AG04449 (cell line): ENCODE measurements at regions of chr1 and their contacts with region 1.

Region 1: GRCh38 chr1:112614460-112615065 is 4.4 kb downstream of the ST7L start:
- DNase-seq: no peak
- H3K4me3 ChIP-seq: no peak overlapping the region
- CTCF ChIP-seq: peak; percentile 62

Region 2: GRCh38 chr1:112358798-112359408 is 255.7 kb before region 1 on chr1:
- CTCF ChIA-PET with region 1: interaction called, 22 read pairs
- POLR2A ChIA-PET with region 1: no interaction called
- DNase-seq: no peak
- H3K4me3 ChIP-seq: no peak overlapping the region
- CTCF ChIP-seq: peak; percentile 91

Region 3: GRCh38 chr1:112460615-112461014 is 153.9 kb before region 1 on chr1:
- CTCF ChIA-PET with region 1: interaction called, 30 read pairs
- POLR2A ChIA-PET with region 1: no interaction called
- DNase-seq: no peak
- H3K4me3 ChIP-seq: no peak overlapping the region
- CTCF ChIP-seq: no peak

Region 4: GRCh38 chr1:112492076-112492475 is 122.5 kb before region 1 on chr1:
- CTCF ChIA-PET with region 1: interaction called, 228 read pairs
- POLR2A ChIA-PET with region 1: no interaction called
- DNase-seq: no peak
- H3K4me3 ChIP-seq: no peak overlapping the region
- CTCF ChIP-seq: no peak

Region 5: GRCh38 chr1:112522621-112523020 is 91.9 kb before region 1 on chr1:
- CTCF ChIA-PET with region 1: interaction called, 12 read pairs
- POLR2A ChIA-PET with region 1: interaction called, 6 read pairs
- DNase-seq: peak; percentile 85
- H3K4me3 ChIP-seq: no peak overlapping the region
- CTCF ChIP-seq: no peak

Region 6: DNA sequence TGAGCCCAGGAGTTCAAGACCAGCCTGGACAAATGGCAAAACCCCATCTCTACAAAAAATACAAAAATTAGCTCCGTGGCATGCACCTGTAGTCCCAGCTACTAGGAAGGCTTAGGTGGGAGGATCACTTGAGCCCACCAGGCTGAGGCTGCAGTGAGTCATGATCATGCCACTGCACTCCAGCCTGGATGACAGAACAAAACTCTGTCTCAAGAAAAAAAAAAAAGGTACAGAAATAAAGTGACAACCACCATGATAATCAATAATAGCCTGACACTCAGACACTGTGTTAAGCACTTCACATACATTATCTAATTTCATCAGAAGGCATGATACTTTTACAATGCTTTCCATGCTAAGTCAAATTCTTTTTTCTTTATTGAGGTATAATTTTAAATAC is 48.8 kb before region 1 on chr1:
- CTCF ChIA-PET with region 1: no interaction called
- POLR2A ChIA-PET with region 1: no interaction called
- DNase-seq: no peak
- H3K4me3 ChIP-seq: no peak overlapping the region
- CTCF ChIP-seq: no peak

Region 7: DNA sequence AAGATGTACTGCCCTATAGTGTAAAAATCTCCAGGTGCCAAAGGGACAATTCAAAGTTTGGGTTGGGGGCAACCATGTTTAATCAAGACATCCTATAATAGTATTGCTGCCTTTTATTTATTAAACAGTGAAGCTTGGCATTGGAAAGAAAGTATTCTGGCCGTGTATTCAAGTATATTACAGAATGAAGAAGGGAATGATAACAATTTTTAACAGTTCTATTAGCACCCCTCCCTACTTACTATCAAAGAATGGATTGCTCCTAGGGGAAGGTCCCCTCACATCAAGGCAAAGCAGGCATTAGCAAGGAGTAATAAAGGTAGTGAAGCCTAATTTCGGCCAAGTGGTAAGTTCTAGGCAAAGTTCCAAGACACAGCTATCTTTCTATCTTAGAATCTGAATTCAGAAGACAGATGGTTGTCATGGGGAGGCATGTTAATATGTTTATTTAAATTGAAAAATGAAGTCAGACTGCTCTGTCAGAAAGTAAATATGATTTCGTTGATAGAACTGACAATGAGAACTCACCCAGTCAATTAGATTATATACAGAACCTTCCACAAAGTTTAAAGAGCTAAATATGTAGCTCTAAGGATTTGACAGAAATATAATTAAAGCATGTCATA is 20.2 kb before region 1 on chr1:
- CTCF ChIA-PET with region 1: interaction called, 10 read pairs
- POLR2A ChIA-PET with region 1: no interaction called
- DNase-seq: no peak
- H3K4me3 ChIP-seq: no peak overlapping the region
- CTCF ChIP-seq: no peak